HEK293T (cell line): ENCODE measurements at regions of chr1 and their contacts with region 1.

Region 1: DNA sequence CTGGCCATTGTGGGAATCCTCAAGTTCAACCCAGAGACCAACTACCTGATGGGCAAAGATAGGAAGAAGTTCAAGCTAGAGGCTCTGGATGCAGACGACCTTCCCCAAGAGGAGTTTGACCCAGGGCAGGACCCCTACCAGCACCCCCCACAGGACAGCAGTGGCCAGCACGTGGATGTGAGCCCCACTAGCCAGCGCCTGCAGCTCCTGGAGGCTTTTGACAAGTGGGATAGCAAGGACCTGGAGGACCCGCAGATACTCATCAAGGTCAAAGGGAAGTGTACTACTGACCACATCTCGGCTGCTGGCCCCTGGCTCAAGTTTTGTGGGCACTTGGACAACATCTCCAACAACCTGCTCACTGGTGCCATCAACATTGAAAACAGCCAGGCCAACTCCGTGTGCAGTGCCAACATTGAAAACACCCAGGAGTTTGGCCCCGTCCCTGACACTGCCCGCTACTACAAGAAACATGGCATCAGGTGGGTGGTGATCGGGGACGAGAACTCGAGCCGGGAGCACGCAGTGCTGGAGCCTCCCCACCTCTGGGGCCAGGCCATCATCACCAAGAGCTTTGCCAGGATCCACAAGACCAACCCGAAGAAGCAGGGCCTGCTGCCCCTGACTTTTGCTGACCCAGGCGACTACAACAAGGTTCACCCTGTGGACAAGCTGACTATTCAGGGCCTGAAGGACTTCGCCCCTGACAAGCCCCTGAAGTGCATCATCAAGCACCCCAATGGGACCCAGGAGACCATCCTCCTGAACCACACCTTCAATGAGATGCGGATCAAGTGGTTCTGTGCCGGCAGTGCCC is 30.6 kb upstream of the GPR137B start:
- DNase-seq: no peak

Region 2: GRCh38 chr1:236130370-236130769 is 18.6 kb after region 1 on chr1:
- CTCF ChIA-PET with region 1: interaction called, 10 read pairs
- POLR2A ChIA-PET with region 1: interaction called, 3 read pairs
- DNase-seq: no peak